ENCODE measurements at regions of chr1 and their contacts with region 1.

Region 1: DNA sequence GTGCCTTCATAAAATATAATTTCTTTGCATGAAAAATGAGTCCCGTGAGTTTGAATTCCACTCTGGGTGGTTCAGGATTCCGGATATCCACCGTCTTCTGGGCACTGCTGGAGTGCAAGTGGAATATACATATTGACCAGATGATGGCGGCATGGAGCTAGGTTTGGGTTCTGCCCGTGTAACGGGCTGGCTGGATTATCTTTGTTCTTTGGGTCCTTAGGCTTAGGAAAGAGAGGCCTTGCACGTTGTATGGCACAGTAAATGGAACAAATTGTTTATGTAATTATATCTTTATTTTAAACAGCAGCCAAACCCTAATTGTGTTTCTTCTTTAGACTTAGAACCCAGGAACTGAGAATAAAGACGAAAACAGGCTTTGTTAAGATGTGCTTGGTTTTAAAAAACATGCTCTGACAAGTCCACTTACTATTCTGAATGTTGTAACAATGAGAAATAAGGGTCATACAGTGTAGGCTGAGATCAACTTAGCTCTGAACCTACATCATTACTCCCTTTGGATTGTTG is 13.5 kb upstream of the ACBD6 start:
- DNase-seq: peak; percentile 62
- H3K4me3 ChIP-seq: no peak overlapping the region
- H3K27ac ChIP-seq: no peak overlapping the region
- H3K4me1 ChIP-seq: peaks cover 0 to 8% (median 0%) of the 10 kb centered on the region in 4 donors
- H3K27me3 ChIP-seq: no peaks in the 10 kb centered on the region
- CTCF ChIP-seq: peak; percentile 74 to 85 (median 80)
- EP300 ChIP-seq: no peak
- POLR2A ChIP-seq: no peak

Region 2: DNA sequence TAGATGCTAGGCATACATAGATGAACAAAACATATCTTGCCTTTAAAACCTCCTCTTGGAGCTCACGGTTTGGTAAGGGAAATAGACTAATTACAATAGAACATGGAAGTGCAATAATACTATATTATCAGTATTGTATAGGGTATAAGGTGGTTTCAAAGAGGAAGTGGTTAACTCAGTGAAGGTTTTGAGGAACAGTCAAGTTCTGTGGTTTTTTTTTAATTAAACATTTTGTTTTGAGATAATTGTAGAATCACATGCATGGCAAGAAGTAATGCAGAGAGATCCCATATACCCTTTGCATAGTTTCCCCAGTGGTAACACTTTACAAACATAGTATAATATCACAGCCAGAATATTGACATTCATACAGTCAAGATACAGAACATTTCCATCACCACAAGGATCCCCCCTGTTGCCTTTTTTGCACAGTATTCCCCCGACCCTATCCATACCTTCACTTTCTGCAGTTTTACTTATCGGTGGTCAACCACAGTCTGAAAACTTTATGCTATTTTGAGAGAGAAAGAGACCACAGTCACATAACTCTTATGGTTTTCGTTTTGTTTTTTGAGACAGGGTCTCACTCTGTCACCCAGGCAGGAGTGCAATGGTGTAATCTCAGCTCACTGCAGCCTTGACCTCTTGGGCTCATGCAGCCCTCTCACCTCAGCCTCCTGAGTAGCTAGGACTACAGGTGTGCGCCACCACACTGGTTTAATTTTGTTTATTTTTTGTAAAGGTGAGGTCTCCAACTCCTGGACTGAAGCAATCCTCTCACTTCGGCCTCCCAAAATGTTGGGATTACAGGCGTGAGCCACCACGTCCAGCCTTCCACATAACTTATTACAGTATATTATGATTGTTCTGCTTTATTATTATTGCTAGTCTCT is 336.3 kb after region 1 on chr1:
- in situ Hi-C with region 1: loop called in 3 of 4 experiments (anchors 5 to 10 kb)
- intact Hi-C with region 1: no loop called
- DNase-seq: no peak
- H3K4me3 ChIP-seq: no peak overlapping the region
- H3K27ac ChIP-seq: no peak overlapping the region
- H3K4me1 ChIP-seq: no peaks in the 10 kb centered on the region
- H3K27me3 ChIP-seq: no peaks in the 10 kb centered on the region
- CTCF ChIP-seq: no peak
- EP300 ChIP-seq: no peak
- POLR2A ChIP-seq: no peak

Region 3: DNA sequence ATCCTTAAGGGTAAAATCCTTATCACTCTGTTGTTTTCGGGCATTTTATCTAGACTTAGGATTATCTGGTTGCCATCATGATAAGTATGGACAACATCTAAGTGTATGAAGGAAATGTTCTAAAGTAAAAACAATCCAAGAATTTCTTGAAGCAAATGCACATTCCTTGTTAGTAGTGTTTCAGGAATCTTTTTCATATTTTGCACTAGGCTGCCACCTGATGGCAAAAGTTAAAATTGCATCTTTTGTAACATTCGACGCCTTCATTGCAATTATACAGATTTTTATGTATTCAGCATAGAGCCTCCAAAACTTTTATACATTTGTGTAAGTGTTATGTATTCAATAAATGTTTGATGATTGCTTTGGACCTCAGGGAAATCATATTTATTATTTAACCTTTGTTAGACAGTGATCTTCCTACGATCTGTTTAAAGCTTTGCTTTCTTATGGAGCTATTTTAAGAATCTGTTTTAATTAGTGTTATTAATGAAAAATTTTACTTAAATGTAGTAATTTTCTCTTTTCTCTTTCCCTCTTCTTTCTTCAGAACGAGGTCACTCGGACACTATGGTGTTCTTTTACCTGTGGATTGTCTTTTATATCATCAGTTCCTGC is 347.3 kb after region 1 on chr1:
- in situ Hi-C with region 1: loop called in 3 of 4 experiments (anchors 5 to 10 kb)
- intact Hi-C with region 1: loop called (anchors 5 kb)
- DNase-seq: peak; percentile 11
- H3K4me3 ChIP-seq: no peak overlapping the region
- H3K27ac ChIP-seq: no peak overlapping the region
- H3K4me1 ChIP-seq: no peaks in the 10 kb centered on the region
- H3K27me3 ChIP-seq: no peaks in the 10 kb centered on the region
- CTCF ChIP-seq: peak; percentile 62 to 78 (median 73)
- EP300 ChIP-seq: no peak
- POLR2A ChIP-seq: no peak

Region 4: DNA sequence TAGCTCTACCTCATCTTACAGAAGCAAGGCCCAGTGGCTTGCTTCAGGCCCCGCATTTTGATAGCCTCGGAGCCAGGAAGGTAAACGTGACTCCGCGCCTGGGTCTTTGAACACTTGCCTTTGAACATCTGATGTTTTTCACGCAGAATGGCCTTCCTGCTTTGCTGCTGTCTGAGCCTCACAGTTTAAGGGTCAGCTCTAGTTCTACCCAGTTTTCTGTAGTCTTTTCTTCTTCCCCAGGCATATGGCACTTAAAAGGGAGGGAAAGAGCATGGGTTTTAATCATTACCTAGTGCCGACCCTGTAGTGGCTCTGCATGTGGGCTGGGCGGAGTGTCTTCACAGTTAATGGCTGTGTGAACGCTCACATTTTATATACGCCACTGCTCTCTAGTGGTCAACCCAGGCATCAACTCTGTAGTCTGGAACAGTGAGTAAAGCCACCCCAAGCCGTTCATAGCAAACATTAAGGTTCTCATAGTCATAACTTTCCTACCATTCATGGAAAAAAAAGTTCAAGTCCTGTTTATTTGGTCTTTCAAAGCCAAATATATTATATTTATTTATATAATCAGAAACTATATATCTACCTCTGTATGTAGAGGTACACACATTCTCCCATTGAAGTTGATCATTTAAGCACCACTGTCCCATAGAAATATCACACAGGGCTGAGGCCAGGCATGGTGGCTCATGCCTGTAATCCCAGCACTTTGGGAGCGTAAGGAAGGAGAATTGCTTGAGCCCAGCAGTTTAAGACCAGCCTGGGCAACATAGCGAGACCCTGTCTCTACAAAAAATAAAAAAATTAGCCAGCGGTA is 650.7 kb after region 1 on chr1:
- in situ Hi-C with region 1: loop called (anchors 10 to 25 kb)
- intact Hi-C with region 1: no loop called
- DNase-seq: peak; percentile 74
- H3K4me3 ChIP-seq: no peak overlapping the region
- H3K27ac ChIP-seq: no peak overlapping the region
- H3K4me1 ChIP-seq: peaks cover 0 to 4% (median 4%) of the 10 kb centered on the region in 4 donors
- H3K27me3 ChIP-seq: no peaks in the 10 kb centered on the region
- CTCF ChIP-seq: peak; percentile 76 to 91 (median 83)
- EP300 ChIP-seq: no peak
- POLR2A ChIP-seq: no peak